Gastrocnemius medialis (tissue), 4 donors: ENCODE measurements at regions of chr19 and their contacts with region 1.

Region 1: GRCh38 chr19:2269244-2269947 is 12.6 kb downstream of the PEAK3 start:
- DNase-seq: peak; percentile 97 to 99
- ATAC-seq: peak; percentile 82 to 89
- H3K4me3 ChIP-seq: peak overlapping the region; percentile 88 to 100 (median 98)
- H3K27ac ChIP-seq: peak overlapping the region; percentile 99 to 100 (median 100)
- H3K4me1 ChIP-seq: peaks cover 35 to 40% of the 10 kb centered on the region in 2 donors
- H3K27me3 ChIP-seq: no peaks in the 10 kb centered on the region
- CTCF ChIP-seq: peak in 4 of 5 experiments; percentile 26 to 66 (median 52)
- POLR2A ChIP-seq: peak; percentile 100

Region 2: GRCh38 chr19:2096480-2097329 is 172.7 kb before region 1 on chr19 and contains the start of gene IZUMO4:
- in situ Hi-C with region 1: no loop called
- intact Hi-C with region 1: loop called (anchors 2 kb)
- DNase-seq: peak; percentile 97 to 98
- ATAC-seq: peak; percentile 86 to 87
- H3K4me3 ChIP-seq: peak within 1 kb of the TSS; percentile 82 to 91 (median 87)
- H3K27ac ChIP-seq: peak within 1 kb of the TSS; percentile 86 to 99 (median 92)
- H3K4me1 ChIP-seq: peaks cover 38 to 39% of the 10 kb centered on the region in 2 donors
- H3K27me3 ChIP-seq: no peaks in the 10 kb centered on the region
- CTCF ChIP-seq: peak; percentile 13 to 56 (median 28)
- POLR2A ChIP-seq: peak; percentile 37 to 40
- total RNA-seq, gene IZUMO4: 0.93 to 1.4 TPM in 2 of 4 donors, not detected in the others

Region 3: GRCh38 chr19:2168619-2169424 is 100.6 kb before region 1 on chr19:
- in situ Hi-C with region 1: no loop called
- intact Hi-C with region 1: loop called (anchors 2 kb)
- DNase-seq: peak; percentile 99 to 100
- ATAC-seq: peak; percentile 84 to 88
- H3K4me3 ChIP-seq: peak overlapping the region in 2 of 4 donors; percentile 1 to 22
- H3K27ac ChIP-seq: peak overlapping the region; percentile 91 to 100 (median 96)
- H3K4me1 ChIP-seq: peaks cover 75 to 81% of the 10 kb centered on the region in 2 donors
- H3K27me3 ChIP-seq: no peaks in the 10 kb centered on the region
- CTCF ChIP-seq: no peak
- POLR2A ChIP-seq: peak; percentile 57 to 76

Region 4: DNA sequence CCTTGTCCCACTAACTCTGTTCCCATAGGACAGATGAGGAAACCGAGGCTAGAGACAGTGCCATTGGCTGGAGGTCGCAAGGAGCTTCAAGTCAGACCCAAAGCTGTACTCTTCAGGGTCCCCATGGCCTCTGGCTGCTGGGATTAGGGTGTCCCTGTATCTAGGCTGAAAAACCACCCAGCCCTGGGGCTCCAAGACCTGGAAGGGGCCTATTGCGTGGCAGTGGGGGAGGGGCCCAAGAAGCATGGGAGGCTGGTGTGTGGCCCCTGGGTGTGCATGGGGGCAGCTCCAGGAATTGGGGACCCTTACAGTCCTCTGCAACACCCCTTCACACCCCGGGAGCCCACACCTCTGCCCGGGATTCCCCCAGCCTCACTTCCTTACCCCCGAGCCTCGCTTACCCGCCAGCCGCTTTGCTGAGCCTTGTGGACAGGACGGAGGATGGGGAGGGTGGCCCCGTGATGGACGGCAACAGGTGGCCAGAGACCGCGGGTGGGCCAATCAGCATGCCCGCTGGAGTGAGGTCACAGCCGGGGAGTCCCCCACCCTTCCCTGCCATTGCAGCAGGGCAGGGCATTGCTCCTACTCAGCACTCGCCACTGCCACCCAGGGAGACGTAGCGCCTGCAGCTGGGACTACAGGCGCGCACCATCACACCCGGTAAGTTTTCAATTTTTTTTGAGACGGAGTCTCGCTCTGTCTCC is 13.3 kb before region 1 on chr19 and contains the start of gene JSRP1:
- in situ Hi-C with region 1: no loop called
- intact Hi-C with region 1: loop called (anchors 1 kb)
- DNase-seq: peak; percentile 95 to 98
- ATAC-seq: peak; percentile 85 to 86
- H3K4me3 ChIP-seq: peak within 1 kb of the TSS; percentile 60 to 77 (median 68)
- H3K27ac ChIP-seq: peak within 1 kb of the TSS; percentile 98 to 100 (median 100)
- H3K4me1 ChIP-seq: peaks cover 17 to 35% of the 10 kb centered on the region in 2 donors
- H3K27me3 ChIP-seq: no peaks in the 10 kb centered on the region
- CTCF ChIP-seq: peak in 2 of 5 experiments; percentile 23 to 42
- POLR2A ChIP-seq: peak; percentile 89 to 90
- total RNA-seq, gene JSRP1: 152 to 383 (median 303) TPM

Region 5: GRCh38 chr19:2391118-2391725 is 121.8 kb after region 1 on chr19:
- in situ Hi-C with region 1: no loop called
- intact Hi-C with region 1: loop called (anchors 5 kb)
- DNase-seq: no peak
- ATAC-seq: peak; percentile 63 to 67
- H3K4me3 ChIP-seq: no peak overlapping the region
- H3K27ac ChIP-seq: no peak overlapping the region
- H3K4me1 ChIP-seq: no peaks in the 10 kb centered on the region
- H3K27me3 ChIP-seq: peaks cover 0 to 3% (median 0%) of the 10 kb centered on the region in 3 donors
- CTCF ChIP-seq: peak; percentile 70 to 81 (median 75)
- POLR2A ChIP-seq: no peak

Region 6: DNA sequence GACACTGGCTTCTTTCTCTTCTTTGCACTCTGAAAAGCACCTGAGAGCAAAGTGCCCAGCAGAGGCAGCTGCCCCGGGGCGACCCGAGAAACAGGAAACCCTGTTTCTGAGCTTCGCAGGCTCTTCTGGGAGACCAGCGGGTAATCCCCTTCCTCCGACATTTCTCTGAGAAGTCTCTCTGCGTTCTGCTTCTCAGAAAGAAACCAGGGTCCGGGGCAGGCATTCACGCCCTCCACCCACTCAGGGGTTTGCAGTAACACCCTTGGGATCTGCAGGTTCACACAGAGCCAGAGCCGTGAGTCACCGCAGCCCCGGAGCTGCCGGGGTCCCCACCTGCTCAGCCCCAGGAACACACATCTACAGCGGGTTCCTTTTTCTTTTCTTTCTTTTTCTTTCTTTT is 292.5 kb after region 1 on chr19:
- in situ Hi-C with region 1: no loop called
- intact Hi-C with region 1: no loop called
- DNase-seq: no peak
- ATAC-seq: no peak
- H3K4me3 ChIP-seq: no peak overlapping the region
- H3K27ac ChIP-seq: no peak overlapping the region
- H3K4me1 ChIP-seq: no peaks in the 10 kb centered on the region
- H3K27me3 ChIP-seq: no peaks in the 10 kb centered on the region
- CTCF ChIP-seq: no peak
- POLR2A ChIP-seq: no peak